Calu3 (cell line): ENCODE measurements at regions of chr17 and their contacts with region 1.

Region 1: DNA sequence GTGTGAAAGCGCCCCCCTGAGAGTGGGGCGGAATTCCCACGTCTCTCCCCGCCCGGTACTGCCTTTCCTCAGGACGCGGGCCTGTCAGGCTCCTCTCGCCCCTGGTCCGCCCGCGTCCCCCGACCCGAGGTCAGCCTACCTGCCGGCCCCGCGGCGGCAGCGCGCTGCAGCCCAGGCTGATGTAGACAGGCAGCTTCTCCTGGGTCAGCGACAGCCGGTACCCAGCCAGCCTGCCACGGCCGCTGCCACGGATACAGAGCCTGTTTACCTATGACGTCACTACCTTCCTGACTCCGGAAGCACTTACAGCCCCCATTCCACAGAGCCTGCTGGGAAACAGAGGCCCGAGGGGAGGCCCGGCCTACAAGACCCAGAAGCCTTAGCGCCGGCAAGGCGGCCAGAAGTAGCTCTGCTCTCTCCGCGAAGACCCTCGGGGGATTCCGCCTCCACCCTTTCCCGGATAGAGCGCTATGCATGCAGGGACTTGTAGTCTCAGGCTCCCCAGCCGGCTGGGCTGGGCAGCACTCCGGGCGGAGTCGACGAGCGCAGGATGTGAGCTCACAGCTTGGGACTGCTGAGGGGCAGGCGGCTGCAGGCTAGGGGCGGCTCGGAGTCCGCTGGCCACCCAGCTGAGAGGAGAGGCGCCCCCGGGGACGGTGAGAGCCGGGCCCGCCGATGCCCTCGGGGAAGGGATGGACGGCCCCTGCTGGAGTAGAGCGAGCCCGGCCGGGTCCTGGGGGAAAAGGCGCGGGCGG is at the starts of genes IFT20 and TNFAIP1:
- DNase-seq: peak; percentile 98
- H3K4me3 Mint-ChIP-seq: peak within 1 kb of the TSS; percentile 93
- H3K27ac Mint-ChIP-seq: peak within 1 kb of the TSS; percentile 89
- H3K4me1 Mint-ChIP-seq: peaks cover 40% of the 10 kb centered on the region
- H3K27me3 Mint-ChIP-seq: no peaks in the 10 kb centered on the region
- CTCF ChIP-seq: no peak
- total RNA-seq, gene IFT20: 31.9 and 32.1 TPM in 2 replicates
- total RNA-seq, gene TNFAIP1: 45.9 and 49.4 TPM in 2 replicates

Region 2: GRCh38 chr17:28357061-28357900 is 21.9 kb after region 1 on chr17 and contains the start of gene POLDIP2:
- CTCF ChIA-PET with region 1: interaction called, 10 read pairs
- intact Hi-C with region 1: no loop called
- DNase-seq: peak; percentile 96
- H3K4me3 Mint-ChIP-seq: peak within 1 kb of the TSS; percentile 91
- H3K27ac Mint-ChIP-seq: peak within 1 kb of the TSS; percentile 87
- H3K4me1 Mint-ChIP-seq: peaks cover 13% of the 10 kb centered on the region
- H3K27me3 Mint-ChIP-seq: no peaks in the 10 kb centered on the region
- CTCF ChIP-seq: no peak
- total RNA-seq, gene POLDIP2: 82.7 and 85.9 TPM in 2 replicates

Region 3: DNA sequence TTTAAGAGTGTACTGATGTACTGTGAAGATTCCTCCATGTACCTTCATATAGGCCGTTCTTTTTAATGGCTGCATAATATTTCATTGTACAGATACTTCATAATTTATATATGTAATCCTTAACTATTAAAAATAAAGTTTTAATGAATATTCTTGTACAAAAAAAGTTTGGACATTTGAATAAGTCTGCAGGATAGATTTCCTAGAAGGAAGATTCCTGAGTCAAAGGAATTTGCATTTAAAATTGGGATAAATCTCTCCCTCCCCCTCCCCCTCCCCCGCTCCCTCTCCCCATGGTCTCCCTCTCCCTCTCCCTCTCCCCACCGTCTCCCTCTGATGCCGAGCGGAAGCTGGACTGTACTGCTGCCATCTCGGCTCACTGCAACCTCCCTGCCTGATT is 122.5 kb after region 1 on chr17:
- CTCF ChIA-PET with region 1: no interaction called
- intact Hi-C with region 1: no loop called
- DNase-seq: no peak
- H3K4me3 Mint-ChIP-seq: no peak overlapping the region
- H3K27ac Mint-ChIP-seq: no peak overlapping the region
- H3K4me1 Mint-ChIP-seq: no peaks in the 10 kb centered on the region
- H3K27me3 Mint-ChIP-seq: peaks cover 12% of the 10 kb centered on the region
- CTCF ChIP-seq: no peak